ENCODE measurements at regions of chr6 and their contacts with region 1.

Region 1: GRCh38 chr6:16409531-16410441 is 171.4 kb downstream of the GMPR start:
- DNase-seq: peak; percentile 70
- H3K4me3 Mint-ChIP-seq: no peak overlapping the region
- H3K27ac Mint-ChIP-seq: no peak overlapping the region
- H3K4me1 Mint-ChIP-seq: peaks cover 40% of the 10 kb centered on the region
- H3K27me3 Mint-ChIP-seq: no peaks in the 10 kb centered on the region

Region 2: DNA sequence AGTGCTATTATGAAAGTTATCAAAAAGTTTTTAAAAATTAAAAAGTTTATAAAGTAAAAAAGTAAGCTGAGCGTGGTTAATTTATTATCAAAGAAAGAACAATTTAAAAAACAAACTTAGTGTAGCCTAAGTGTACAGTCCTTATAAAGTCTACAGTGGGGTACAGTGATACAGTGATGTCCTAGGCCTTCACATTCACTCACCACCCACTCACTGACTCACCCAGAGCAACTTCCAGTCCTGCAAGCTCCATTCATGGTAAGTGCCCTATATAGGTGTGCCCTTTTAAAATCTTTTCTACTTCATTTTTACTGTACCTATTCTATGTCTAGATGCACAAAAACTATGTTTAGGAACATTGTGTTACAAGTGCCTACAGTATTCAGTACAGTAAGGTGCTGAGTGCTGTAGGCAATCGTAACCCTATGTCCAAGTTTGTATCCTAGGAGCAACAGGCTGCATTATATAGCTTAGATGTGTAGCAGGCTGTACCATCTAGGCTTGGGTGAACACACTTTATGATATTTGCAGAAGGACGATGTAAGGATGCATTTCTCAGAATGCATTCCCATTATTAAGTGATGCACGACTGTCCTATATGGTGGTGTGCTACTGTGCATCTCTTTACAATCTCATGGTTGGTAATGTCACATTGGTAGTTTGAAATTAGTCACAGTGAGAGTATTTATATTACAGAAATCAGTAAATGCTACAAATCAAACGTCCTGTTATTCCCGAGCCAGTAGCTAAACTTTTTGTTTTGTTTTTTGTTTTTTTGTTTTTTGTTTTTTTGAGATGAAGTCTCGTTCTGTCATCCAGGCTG is 13.1 kb before region 1 on chr6:
- CTCF ChIA-PET with region 1: interaction called, 10 read pairs
- DNase-seq: no peak
- H3K4me3 Mint-ChIP-seq: no peak overlapping the region
- H3K27ac Mint-ChIP-seq: no peak overlapping the region
- H3K4me1 Mint-ChIP-seq: no peaks in the 10 kb centered on the region
- H3K27me3 Mint-ChIP-seq: no peaks in the 10 kb centered on the region

Region 3: DNA sequence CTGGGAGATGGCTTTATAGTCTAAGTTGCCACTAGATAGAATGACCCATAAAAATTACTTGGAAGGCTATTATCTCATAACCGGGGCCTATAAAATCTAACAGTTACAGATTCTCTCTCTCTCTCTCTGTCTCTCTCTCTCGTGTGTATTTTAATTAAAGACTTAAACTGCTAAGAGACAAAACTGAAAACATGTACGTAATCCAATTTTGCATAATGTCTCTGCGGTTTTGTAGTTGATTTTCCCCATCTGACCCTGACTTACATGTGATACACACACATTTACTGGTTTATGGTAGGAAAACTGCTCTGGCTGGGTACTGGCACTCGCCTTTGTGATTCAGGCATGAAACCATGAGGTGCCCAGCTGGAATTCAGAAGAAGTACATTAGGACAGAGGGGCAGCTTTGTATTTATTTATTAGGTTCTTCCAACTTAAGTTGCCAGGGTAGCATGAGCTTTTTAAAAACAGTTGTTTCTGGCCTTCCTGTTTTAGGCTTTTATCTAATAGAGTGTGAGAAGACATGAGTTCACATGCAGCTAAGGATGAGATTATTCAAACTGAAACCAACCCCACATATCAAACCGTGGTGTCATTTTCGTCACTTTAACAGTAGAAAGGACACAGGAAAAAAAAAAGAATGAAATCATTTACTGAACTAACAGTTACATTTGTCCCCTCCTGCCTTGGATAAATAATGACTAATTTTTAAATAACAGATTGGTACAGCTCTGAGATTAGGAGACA is 11.1 kb after region 1 on chr6:
- CTCF ChIA-PET with region 1: interaction called, 11 read pairs
- DNase-seq: peak; percentile 56
- H3K4me3 Mint-ChIP-seq: peak overlapping the region; percentile 59
- H3K27ac Mint-ChIP-seq: peak overlapping the region; percentile 94
- H3K4me1 Mint-ChIP-seq: peaks cover 47% of the 10 kb centered on the region
- H3K27me3 Mint-ChIP-seq: no peaks in the 10 kb centered on the region

Region 4: GRCh38 chr6:17354700-17355403 is 945.1 kb after region 1 on chr6:
- CTCF ChIA-PET with region 1: no interaction called
- DNase-seq: no peak
- H3K4me3 Mint-ChIP-seq: no peak overlapping the region
- H3K27ac Mint-ChIP-seq: no peak overlapping the region
- H3K4me1 Mint-ChIP-seq: no peaks in the 10 kb centered on the region
- H3K27me3 Mint-ChIP-seq: no peaks in the 10 kb centered on the region